Right ventricle myocardium superior (tissue), 1 donor: ENCODE measurements at regions of chr12 and their contacts with region 1.

Region 1: GRCh38 chr12:12916135-12916944 is 25.0 kb downstream of the GPRC5A start:
- DNase-seq: peak; percentile 91
- ATAC-seq: peak; percentile 98

Region 2: DNA sequence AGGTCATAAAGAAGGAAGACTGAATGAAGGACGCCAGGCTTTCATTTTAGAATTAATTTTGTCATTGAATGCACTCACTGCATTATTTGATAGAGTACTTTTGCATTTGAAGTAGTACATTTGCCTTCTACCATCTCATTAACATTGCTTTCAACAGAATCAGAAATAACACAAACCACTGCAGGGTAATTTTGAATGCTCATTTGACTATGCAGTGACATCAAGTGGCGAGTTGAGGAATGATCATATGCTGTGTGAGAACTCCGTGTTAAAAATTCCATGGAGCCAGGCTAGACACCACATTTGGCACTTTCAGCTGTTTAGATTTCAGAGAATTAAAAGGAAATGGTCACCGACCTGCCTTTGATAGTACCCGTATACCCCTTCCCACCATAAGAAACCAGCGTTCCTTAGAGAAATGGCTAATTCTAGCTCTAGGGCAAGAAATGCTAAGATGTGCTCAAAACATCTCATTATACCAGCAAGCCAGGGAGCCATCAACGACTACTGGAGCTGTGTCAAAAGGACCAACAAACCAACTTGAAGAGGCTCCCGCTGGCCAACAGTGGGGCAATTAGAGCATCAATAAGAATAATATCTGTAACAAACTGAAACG is 67.2 kb after region 1 on chr12:
- intact Hi-C with region 1: loop called (anchors 5 kb)
- DNase-seq: no peak
- ATAC-seq: peak; percentile 83

Region 3: GRCh38 chr12:13211859-13212664 is 295.7 kb after region 1 on chr12:
- intact Hi-C with region 1: loop called (anchors 5 kb)
- DNase-seq: no peak
- ATAC-seq: peak; percentile 50